Activated CD8-positive, alpha-beta memory T cell treated with anti-CD3 and anti-CD28 coated beads, Interleukin-2, amount 10 ng/mL, durations not matched to agents 7 days and 5 days (primary cell): ENCODE measurements at regions of chr1 and their contacts with region 1.

Region 1: GRCh38 chr1:54944610-54945544 is 35.6 kb upstream of the TMEM61 start:
- DNase-seq: peak; percentile 86
- ATAC-seq: peak; percentile 92
- H3K4me3 Mint-ChIP-seq: no peak overlapping the region
- H3K27ac Mint-ChIP-seq: peak overlapping the region; percentile 53
- H3K4me1 Mint-ChIP-seq: peaks cover 29% of the 10 kb centered on the region
- H3K27me3 Mint-ChIP-seq: peaks cover 33% of the 10 kb centered on the region

Region 2: GRCh38 chr1:54742282-54742681 is 202.6 kb before region 1 on chr1:
- CTCF ChIA-PET with region 1: no interaction called
- DNase-seq: no peak
- ATAC-seq: no peak
- H3K4me3 Mint-ChIP-seq: no peak overlapping the region
- H3K27ac Mint-ChIP-seq: no peak overlapping the region
- H3K4me1 Mint-ChIP-seq: no peaks in the 10 kb centered on the region
- H3K27me3 Mint-ChIP-seq: no peaks in the 10 kb centered on the region

Region 3: DNA sequence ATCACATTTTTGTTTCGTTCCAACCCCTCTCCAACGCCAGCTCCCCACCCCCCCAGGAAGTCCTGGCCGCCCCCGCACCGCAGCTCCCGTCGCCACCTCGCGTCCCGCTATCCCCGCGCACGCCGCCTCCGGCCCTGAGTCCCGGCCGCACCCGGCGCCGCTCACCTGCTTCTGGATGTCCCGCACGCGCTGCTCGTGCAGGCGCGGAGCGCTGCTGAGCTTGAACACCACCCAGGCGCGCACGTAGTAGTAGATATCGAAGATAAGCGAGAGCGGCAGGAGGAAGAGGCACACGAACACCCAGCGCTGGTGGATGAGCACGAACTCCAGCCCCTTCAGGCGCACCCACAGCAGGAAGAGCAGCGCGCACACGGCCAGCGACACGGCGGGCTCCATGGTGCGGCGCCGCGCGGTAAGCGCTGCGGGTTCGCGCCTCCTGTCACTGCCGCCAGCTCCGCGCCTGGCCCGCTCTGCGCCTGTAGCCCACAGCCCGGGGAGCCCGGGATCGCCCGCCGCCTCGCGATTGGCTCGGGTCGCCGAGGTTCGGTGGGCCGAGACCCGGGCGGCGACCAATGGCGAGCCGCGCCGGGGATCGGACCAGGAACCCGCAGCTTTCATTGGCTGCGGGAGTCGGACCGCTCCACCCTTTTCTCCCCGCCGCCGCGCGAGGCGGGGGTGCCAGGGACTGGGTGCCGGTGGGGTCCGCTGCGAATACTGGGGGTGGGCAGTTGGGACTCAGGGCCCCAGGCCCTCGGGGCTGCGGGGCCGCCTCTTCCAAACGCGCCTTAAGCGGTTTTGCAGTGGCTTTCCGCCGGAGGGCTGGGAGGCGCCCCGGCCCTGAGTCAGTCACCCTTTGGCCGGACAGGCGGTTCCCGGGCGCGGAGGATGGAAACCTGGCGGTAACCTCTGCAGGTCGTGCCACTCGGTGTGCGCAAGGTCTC is 57.9 kb before region 1 on chr1 and contains the start of gene DHCR24:
- CTCF ChIA-PET with region 1: interaction called, 19 read pairs
- DNase-seq: peak; percentile 87
- ATAC-seq: peak; percentile 98
- H3K4me3 Mint-ChIP-seq: peak within 1 kb of the TSS; percentile 99
- H3K27ac Mint-ChIP-seq: peak within 1 kb of the TSS; percentile 79
- H3K4me1 Mint-ChIP-seq: peaks cover 51% of the 10 kb centered on the region
- H3K27me3 Mint-ChIP-seq: peaks cover 26% of the 10 kb centered on the region
- total RNA-seq, gene DHCR24: 121 to 187 TPM

Region 4: DNA sequence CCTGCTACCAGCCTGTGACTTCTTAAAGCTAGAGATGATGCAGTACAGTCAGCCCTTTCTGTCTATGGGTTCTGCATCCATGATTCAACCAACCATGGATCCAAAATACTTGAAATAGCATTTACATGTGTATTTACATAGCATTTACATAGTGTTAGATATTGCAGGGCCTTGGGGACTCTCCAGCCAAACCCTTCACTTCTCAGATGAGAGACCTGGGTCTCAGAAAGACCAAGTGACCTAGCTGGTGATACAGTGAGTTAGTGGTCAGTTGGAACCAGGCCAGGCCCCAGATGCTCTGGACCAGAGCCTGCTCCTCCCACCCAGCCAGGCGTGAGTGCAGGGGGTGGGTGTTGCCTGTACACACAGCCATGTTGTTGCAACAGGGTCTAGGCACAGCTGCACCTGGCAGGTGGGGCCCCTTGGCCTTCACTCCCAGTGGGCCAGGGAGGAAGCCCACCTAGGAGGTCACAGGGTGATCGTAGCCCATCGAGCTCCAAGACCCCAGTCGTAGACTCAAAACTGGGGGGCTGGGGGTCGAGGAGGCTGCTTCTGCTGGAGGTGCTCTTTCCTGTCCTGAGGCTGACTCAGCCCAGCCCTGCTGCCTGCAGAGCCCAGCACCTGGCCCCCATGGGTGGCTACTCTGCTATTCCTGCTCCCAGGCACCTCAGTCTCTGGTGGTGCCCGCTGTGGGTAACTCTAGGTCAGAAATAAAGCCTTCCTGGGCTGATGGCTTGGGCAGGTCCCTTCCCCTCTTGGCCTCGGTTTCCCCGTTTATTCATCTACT is 43.2 kb after region 1 on chr1:
- CTCF ChIA-PET with region 1: interaction called, 44 read pairs
- DNase-seq: no peak
- ATAC-seq: no peak
- H3K4me3 Mint-ChIP-seq: no peak overlapping the region
- H3K27ac Mint-ChIP-seq: no peak overlapping the region
- H3K4me1 Mint-ChIP-seq: peaks cover 7% of the 10 kb centered on the region
- H3K27me3 Mint-ChIP-seq: peaks cover 18% of the 10 kb centered on the region

Region 5: GRCh38 chr1:54996359-54996868 is 51.5 kb after region 1 on chr1:
- CTCF ChIA-PET with region 1: interaction called, 341 read pairs
- DNase-seq: peak; percentile 91
- ATAC-seq: peak; percentile 80
- H3K4me3 Mint-ChIP-seq: peak overlapping the region; percentile 60
- H3K27ac Mint-ChIP-seq: peak overlapping the region; percentile 90
- H3K4me1 Mint-ChIP-seq: peaks cover 42% of the 10 kb centered on the region
- H3K27me3 Mint-ChIP-seq: peaks cover 38% of the 10 kb centered on the region

Region 6: DNA sequence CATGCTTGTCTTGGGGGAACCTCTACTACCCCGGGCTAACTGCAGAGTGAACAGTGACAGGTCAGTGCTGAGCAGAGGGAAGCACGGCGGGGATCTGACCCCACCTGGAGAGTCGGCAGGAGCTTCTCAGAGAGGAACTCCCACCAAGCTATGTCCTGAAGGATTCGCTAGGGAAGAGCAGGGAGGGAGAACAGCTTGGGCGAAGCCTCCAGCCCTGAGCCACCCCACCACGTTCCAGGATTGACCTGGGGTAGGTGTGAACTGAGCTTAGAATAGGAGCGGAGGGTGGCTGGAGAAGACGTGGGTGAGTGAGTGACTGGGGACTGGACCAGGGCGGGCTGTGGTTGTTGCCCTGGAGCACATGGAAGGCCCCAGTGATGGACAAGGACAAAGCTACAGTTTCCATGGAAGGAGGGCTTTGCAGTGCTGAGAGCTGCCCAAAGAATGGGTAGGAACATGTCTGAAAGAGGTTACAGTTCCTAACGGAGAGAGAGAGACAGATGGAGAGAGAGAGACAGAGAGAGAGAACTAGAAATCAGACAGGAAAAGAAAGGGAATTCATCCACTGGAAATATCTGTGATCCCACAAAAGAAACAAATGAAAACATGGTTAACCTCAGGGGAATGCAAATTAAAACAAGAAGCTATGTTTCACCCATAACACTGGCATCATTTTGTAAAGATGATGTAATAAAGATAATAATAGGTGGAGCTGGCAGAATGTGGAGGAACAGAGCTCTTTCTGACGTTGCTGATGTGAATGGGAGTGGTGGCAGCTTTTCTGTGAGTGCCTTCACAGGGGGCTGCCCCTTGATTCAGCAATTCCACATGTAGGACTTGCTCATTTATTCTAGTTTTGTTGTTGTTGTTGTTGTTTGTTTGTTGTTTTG is 71.1 kb after region 1 on chr1:
- CTCF ChIA-PET with region 1: interaction called, 78 read pairs
- DNase-seq: no peak
- ATAC-seq: no peak
- H3K4me3 Mint-ChIP-seq: no peak overlapping the region
- H3K27ac Mint-ChIP-seq: no peak overlapping the region
- H3K4me1 Mint-ChIP-seq: peaks cover 4% of the 10 kb centered on the region
- H3K27me3 Mint-ChIP-seq: peaks cover 44% of the 10 kb centered on the region

Region 7: DNA sequence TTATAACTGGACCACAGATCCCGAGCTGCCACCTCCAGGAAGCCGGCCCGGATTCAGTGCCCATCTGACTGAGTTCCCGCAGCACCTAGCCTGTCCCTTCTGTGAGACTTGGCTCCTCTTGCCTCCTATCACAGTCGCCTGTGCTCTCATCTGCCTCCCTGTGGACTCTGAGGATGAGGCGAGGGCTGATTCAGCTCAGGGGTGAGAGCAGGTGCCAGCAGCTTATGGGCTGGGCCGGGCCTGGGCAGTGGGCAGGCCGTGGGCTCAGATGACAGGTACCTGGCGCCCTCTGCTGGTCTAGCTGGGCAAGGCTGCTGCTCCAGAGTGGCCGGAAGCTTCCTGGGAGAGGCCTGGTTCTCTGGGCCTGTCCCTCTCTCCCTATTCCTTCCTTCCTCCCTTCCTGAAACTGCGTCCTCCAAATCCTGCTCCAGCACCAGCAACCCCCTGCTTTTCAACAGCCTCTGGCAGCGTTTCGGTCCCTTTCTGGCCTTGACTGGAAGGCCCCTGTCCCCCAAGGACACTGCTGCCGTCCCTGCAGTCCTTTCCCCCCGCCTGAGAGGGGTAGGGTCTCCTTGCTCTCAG is 77.2 kb after region 1 on chr1:
- CTCF ChIA-PET with region 1: interaction called, 78 read pairs
- DNase-seq: peak; percentile 80
- ATAC-seq: peak; percentile 98
- H3K4me3 Mint-ChIP-seq: no peak overlapping the region
- H3K27ac Mint-ChIP-seq: no peak overlapping the region
- H3K4me1 Mint-ChIP-seq: peaks cover 3% of the 10 kb centered on the region
- H3K27me3 Mint-ChIP-seq: peaks cover 15% of the 10 kb centered on the region